HEK293 (cell line): ENCODE measurements at regions of chr7 and their contacts with region 1.

Region 1: GRCh38 chr7:155380221-155380861 is 77.6 kb upstream of the EN2 start:
- H3K4me3 ChIP-seq: no peak overlapping the region
- H3K27ac ChIP-seq: no peak overlapping the region
- H3K4me1 ChIP-seq: no peaks in the 10 kb centered on the region
- CTCF ChIP-seq: peak; percentile 65

Region 2: GRCh38 chr7:155283565-155284194 is 96.7 kb before region 1 on chr7:
- CTCF ChIA-PET with region 1: no interaction called
- POLR2A ChIA-PET with region 1: no interaction called
- H3K4me3 ChIP-seq: no peak overlapping the region
- H3K27ac ChIP-seq: no peak overlapping the region
- H3K4me1 ChIP-seq: no peaks in the 10 kb centered on the region
- CTCF ChIP-seq: no peak

Region 3: DNA sequence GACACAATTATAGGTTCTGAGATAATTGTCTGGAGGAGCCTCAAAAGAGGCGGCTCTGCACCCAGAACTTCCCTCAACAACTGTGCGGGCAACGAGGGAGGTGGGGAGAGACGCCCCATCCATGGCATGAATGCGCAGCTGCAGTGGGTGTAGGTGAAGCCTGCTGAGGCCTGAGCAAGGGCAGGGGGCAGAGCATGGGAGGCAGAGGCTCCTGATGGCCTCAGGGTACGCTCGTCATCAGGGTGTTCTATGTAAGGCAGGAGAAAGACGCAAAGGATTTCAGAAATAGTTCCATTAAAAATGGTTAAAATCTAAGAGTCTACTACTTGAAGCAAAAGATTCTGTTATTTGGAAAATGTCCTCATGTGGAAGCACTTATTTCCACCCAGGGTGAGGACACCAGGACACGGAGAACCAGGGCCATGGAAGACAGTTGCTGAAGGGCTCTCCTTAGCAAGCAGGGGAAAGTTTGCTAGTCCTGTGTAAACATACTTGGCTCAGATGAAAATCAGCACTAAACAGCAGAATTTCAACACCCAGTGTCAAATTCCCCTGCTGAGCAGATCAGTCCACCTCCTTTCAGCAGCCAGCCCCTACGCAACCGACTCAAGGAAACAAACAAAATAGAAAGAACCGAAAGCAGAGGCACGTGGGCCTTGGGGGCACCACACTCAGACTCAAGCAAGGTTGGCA is 63.8 kb before region 1 on chr7:
- CTCF ChIA-PET with region 1: no interaction called
- POLR2A ChIA-PET with region 1: no interaction called
- H3K4me3 ChIP-seq: no peak overlapping the region
- H3K27ac ChIP-seq: no peak overlapping the region
- H3K4me1 ChIP-seq: no peaks in the 10 kb centered on the region
- CTCF ChIP-seq: no peak

Region 4: DNA sequence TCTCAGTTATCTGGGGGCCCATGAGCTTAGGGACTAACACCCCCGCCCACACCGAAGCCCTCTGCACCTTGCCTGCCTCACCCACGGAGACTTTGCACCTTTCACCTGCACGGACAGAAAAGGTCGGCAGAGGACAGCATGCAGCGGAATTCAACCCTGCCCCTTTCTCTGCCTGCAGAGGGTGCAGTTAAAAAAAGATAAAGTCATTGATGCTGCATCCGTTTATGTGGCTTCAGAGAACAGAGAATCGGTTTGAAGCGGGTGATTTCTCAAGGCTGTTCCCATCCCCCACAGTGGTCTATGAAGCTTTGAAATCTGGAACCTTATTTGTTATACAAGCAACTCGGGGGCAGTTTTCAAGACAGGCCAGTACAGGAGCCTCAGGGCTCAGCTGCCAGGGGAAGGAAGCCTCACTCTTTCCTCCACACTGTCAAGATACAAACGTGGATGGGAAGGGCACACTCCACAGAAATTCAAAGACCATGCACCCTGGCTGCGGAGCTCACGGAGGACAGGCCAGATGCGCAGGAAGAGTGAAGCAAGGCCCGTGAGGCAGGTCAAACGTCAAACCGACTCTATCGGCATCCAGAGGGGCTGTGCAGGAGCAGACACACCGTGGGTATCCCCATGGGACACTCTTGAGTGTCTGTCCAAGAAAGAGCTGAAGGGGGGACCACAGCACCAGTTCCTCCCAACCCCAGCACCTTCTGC is 16.3 kb before region 1 on chr7:
- CTCF ChIA-PET with region 1: interaction called, 12 read pairs
- POLR2A ChIA-PET with region 1: no interaction called
- H3K4me3 ChIP-seq: no peak overlapping the region
- H3K27ac ChIP-seq: no peak overlapping the region
- H3K4me1 ChIP-seq: no peaks in the 10 kb centered on the region
- CTCF ChIP-seq: no peak

Region 5: DNA sequence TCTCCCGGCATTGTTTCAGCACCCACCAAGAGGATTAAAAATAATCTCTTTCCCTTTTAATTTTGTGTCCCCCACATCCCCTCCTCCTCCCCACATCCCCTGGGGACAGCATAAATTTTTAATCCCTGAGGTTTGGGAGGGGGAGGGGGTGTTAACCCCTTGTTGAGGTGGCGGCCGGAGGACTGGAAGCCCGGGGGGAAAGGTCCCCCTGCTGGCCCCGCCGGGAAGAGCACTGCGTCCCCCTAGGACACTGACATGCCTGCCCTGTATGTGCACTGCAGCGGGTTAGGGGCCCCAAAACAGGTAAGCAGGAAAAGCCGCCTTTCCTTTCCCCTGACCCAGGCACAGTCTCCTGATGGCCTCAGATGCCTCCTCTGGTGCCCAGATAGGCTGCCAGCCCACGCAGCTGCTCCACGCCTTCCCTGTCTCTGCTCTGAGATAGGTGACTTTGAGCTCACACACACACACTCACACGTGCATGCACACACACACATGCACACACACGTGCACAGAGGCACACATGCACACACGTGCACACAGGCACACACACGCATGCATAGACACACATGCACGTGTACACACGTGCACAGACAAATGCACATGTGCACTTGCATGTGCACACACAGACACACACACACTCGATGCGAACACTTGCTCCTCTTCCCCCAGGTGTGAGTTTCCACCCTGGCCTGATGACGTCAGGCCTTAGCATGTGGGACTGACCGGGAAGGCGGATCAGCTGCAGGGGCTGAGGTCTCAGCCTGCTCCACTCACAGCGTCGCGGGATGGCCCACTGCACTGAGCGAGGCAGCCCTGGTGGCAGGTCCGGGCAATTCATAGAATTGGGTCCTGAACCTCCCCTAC is 153.7 kb after region 1 on chr7:
- CTCF ChIA-PET with region 1: interaction called, 37 read pairs
- POLR2A ChIA-PET with region 1: no interaction called
- H3K4me3 ChIP-seq: no peak overlapping the region
- H3K27ac ChIP-seq: no peak overlapping the region
- H3K4me1 ChIP-seq: no peaks in the 10 kb centered on the region
- CTCF ChIP-seq: peak; percentile 75